CD8-positive, alpha-beta memory T cell (primary cell): ENCODE measurements at regions of chr11 and their contacts with region 1.

Region 1: GRCh38 chr11:62905927-62906531 is 15.1 kb downstream of the CHRM1 start:
- DNase-seq: peak; percentile 55 to 82 (median 68)
- H3K4me3 ChIP-seq: no peak overlapping the region
- H3K4me3 Mint-ChIP-seq: no peak overlapping the region
- H3K27ac ChIP-seq: no peak overlapping the region
- H3K27ac Mint-ChIP-seq: peak overlapping the region in 1 of 8 donors; percentile 14
- H3K4me1 ChIP-seq: no peaks in the 10 kb centered on the region
- H3K4me1 Mint-ChIP-seq: peaks cover 0 to 5% (median 4%) of the 10 kb centered on the region in 3 donors
- H3K27me3 ChIP-seq: no peaks in the 10 kb centered on the region
- H3K27me3 Mint-ChIP-seq: peaks cover 0 to 35% of the 10 kb centered on the region in 2 donors

Region 2: DNA sequence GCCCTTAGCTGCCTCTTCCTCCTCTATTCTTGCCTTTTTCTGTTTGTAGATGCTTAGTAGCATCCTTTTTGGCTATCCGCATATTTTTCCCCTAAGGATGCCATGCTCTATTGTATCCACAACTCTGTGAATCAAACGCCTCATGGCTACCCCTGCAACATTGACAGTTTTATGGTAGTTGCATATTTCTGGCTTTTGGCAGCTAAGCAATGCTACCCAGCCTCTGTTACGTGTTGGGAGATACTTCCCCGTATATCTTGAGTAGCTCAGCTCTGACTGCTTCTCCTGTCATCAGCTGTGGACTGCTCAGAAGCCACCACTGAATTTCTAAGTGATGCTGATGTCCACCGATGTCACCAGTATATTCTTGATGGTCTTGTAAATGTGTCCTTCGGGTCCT is 40.4 kb before region 1 on chr11:
- CTCF ChIA-PET with region 1: no interaction called
- POLR2A ChIA-PET with region 1: no interaction called
- DNase-seq: no peak
- H3K4me3 ChIP-seq: no peak overlapping the region
- H3K4me3 Mint-ChIP-seq: no peak overlapping the region
- H3K27ac ChIP-seq: no peak overlapping the region
- H3K27ac Mint-ChIP-seq: no peak overlapping the region
- H3K4me1 ChIP-seq: no peaks in the 10 kb centered on the region
- H3K4me1 Mint-ChIP-seq: peaks cover 3 to 6% (median 5%) of the 10 kb centered on the region in 3 donors
- H3K27me3 ChIP-seq: no peaks in the 10 kb centered on the region
- H3K27me3 Mint-ChIP-seq: no peaks in the 10 kb centered on the region

Region 3: GRCh38 chr11:62922658-62923431 is 16.8 kb after region 1 on chr11:
- CTCF ChIA-PET with region 1: interaction called, 29 read pairs
- POLR2A ChIA-PET with region 1: no interaction called
- DNase-seq: no peak
- H3K4me3 ChIP-seq: no peak overlapping the region
- H3K4me3 Mint-ChIP-seq: peak overlapping the region; percentile 7 to 86 (median 75)
- H3K27ac ChIP-seq: no peak overlapping the region
- H3K27ac Mint-ChIP-seq: peak overlapping the region in 2 of 8 donors; percentile 65 to 81
- H3K4me1 ChIP-seq: peaks cover 20% of the 10 kb centered on the region
- H3K4me1 Mint-ChIP-seq: peaks cover 24 to 44% (median 33%) of the 10 kb centered on the region in 3 donors
- H3K27me3 ChIP-seq: peaks cover 38% of the 10 kb centered on the region
- H3K27me3 Mint-ChIP-seq: peaks cover 46 to 73% of the 10 kb centered on the region in 2 donors

Region 4: GRCh38 chr11:62974848-62975522 is 69.0 kb after region 1 on chr11:
- CTCF ChIA-PET with region 1: interaction called, 10 read pairs
- POLR2A ChIA-PET with region 1: no interaction called
- DNase-seq: no peak
- H3K4me3 ChIP-seq: no peak overlapping the region
- H3K4me3 Mint-ChIP-seq: no peak overlapping the region
- H3K27ac ChIP-seq: no peak overlapping the region
- H3K27ac Mint-ChIP-seq: peak overlapping the region in 1 of 8 donors; percentile 29
- H3K4me1 ChIP-seq: no peaks in the 10 kb centered on the region
- H3K4me1 Mint-ChIP-seq: no peaks in the 10 kb centered on the region
- H3K27me3 ChIP-seq: no peaks in the 10 kb centered on the region
- H3K27me3 Mint-ChIP-seq: peaks cover 8 to 48% of the 10 kb centered on the region in 2 donors

Region 5: DNA sequence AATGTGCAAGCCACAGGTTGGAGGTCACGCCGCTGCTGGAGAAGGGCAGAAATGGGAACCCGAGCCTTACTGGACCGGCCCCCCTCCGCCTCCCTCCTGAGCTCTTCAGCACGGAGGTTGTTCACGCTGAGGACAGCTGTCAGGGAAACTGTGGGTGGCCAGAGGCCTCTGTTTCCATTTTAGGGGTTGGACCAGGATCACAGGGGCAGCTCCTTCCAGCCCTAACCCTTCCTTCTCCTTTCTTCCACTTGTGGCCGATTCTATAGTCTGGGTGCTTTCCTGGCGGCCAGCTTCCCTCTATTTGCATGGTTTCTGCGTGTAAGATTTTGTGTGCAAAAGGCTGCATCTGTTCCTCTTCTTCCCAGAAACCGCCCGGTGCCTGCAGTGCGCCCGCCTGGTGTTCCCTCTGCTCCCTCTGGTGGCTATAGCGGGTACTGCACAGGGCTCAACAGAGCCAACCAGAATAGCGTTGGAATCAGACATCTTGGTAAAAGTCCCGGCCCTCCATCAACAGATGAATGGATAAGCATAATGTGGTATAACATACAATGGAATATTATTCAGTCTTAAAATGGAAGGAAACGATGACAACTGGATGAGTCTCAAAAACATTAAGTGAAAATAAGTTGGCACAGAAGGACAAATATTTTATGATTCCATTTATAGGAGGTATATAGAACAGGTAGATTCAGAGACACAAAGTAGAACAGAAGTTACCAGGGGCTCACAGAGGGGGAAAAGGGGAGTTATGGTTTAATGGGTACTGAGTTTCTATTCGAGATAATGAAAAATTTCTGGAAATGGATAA is 118.0 kb after region 1 on chr11:
- CTCF ChIA-PET with region 1: interaction called, 153 read pairs
- POLR2A ChIA-PET with region 1: no interaction called
- DNase-seq: peak; percentile 59 to 85 (median 73)
- H3K4me3 ChIP-seq: no peak overlapping the region
- H3K4me3 Mint-ChIP-seq: no peak overlapping the region
- H3K27ac ChIP-seq: no peak overlapping the region
- H3K27ac Mint-ChIP-seq: peak overlapping the region in 1 of 8 donors; percentile 77
- H3K4me1 ChIP-seq: no peaks in the 10 kb centered on the region
- H3K4me1 Mint-ChIP-seq: peaks cover 2 to 7% (median 5%) of the 10 kb centered on the region in 3 donors
- H3K27me3 ChIP-seq: no peaks in the 10 kb centered on the region
- H3K27me3 Mint-ChIP-seq: peaks cover 12 to 32% of the 10 kb centered on the region in 2 donors

Region 6: GRCh38 chr11:63032457-63032856 is 126.4 kb after region 1 on chr11:
- CTCF ChIA-PET with region 1: interaction called, 15 read pairs
- POLR2A ChIA-PET with region 1: no interaction called
- DNase-seq: no peak
- H3K4me3 ChIP-seq: no peak overlapping the region
- H3K4me3 Mint-ChIP-seq: no peak overlapping the region
- H3K27ac ChIP-seq: no peak overlapping the region
- H3K27ac Mint-ChIP-seq: no peak overlapping the region
- H3K4me1 ChIP-seq: no peaks in the 10 kb centered on the region
- H3K4me1 Mint-ChIP-seq: peaks cover 0 to 4% (median 3%) of the 10 kb centered on the region in 3 donors
- H3K27me3 ChIP-seq: no peaks in the 10 kb centered on the region
- H3K27me3 Mint-ChIP-seq: peaks cover 3 to 46% of the 10 kb centered on the region in 2 donors